GM12878 (cell line): ENCODE measurements at regions of chr11 and their contacts with region 1.

Region 1: DNA sequence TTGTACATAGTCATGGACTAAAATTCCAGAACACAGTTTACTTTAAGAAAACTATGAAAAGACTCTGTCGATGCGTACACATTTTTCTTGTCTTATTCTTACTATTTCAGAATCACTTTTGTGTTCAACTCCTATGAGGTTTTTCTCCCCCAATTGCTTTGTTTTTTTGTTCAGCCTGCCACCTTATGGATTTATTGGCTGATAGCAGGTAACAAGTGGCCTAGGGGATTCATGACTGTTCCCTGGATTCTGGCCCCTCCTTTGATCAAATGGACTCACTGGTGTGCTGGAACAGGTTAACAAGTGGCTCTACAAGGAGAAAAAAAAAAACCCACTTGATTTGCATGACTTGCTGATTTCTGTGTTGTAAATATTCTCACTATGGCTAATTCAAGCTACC is 10.6 kb downstream of the MMP20 start:
- DNase-seq: no peak
- ATAC-seq: 0 out of 3 replicates have a peak, but pooled peaks have one; percentile 3
- H3K4me3 ChIP-seq: no peak overlapping the region
- H3K27ac ChIP-seq: no peak overlapping the region
- H3K4me1 ChIP-seq: peaks cover 18% of the 10 kb centered on the region
- H3K27me3 ChIP-seq: no peaks in the 10 kb centered on the region
- CTCF ChIP-seq: peak; percentile 18 to 55 (median 40); a peak in 5 of 6 replicates
- EP300 ChIP-seq: no peak
- POLR2A ChIP-seq: no peak
- RAD21 ChIP-seq: peak; percentile 80

Region 2: DNA sequence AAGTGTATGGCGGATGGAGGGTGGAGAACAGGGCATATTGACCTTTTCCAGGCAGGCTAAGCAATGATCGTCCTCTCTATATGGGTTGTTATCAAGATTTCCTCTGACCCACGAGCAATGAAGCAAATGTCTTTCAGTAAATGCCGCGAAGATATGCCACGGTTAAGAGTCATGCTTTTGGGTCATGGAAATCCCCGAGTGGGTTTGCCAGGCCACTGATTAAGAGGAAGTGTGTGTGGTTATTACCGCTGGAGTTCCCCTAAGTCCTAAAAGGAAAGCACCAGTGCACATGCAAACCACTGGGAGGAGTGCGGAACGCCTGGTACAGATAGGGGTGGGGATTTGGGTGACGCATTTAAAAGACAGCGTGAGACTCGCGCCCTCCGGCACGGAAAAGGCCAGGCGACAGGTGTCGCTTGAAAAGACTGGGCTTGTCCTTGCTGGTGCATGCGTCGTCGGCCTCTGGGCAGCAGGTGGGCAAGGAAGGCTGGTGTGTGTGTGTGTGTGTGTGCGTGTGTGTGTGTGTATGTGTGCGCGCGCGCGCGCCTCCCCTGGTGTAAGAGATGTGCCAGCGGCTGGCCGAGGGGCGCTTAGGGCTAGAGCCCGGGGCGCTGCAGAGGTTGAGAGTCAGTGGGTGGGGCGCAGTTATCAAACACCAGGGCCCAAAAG is 297.3 kb before region 1 on chr11 and contains the start of gene BIRC3:
- CTCF ChIA-PET with region 1: interaction called, 31 read pairs
- POLR2A ChIA-PET with region 1: interaction called, 4 read pairs
- RAD21 ChIA-PET with region 1: interaction called, 28 read pairs
- SMC1A ChIA-PET with region 1: interaction called, 31 read pairs
- in situ Hi-C with region 1: no loop called
- intact Hi-C with region 1: no loop called
- DNase-seq: peak; percentile 100
- ATAC-seq: peak; percentile 75
- H3K4me3 ChIP-seq: peak within 1 kb of the TSS; percentile 76
- H3K27ac ChIP-seq: peak within 1 kb of the TSS; percentile 97
- H3K4me1 ChIP-seq: peaks cover 24% of the 10 kb centered on the region
- H3K27me3 ChIP-seq: no peaks in the 10 kb centered on the region
- CTCF ChIP-seq: peak in 2 of 3 experiments; percentile 14 to 20; a peak in 2 of 6 replicates
- EP300 ChIP-seq: peak; percentile 99
- POLR2A ChIP-seq: peak; percentile 99
- RAD21 ChIP-seq: no peak
- polyA plus RNA-seq, gene BIRC3: 63.8 to 92.9 TPM

Region 3: DNA sequence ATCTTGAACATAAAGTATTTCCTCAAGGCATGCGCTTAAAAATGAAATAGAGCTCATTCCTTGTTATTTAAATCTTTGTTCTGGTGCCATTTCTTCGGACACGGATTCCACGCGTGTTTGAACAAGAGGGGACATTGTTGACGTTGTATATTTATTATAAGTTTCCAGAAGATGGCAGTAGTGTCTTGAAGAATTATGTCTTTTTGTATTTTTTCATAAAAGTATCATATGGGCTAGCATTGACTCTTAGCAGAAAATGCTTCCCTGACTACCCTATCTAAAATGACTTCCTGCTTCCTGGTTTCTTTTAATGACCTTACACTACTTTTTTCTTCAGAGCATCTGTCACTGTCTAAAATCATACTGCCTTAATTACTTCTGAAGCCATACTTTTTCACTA is 247.1 kb before region 1 on chr11:
- CTCF ChIA-PET with region 1: interaction called, 90 read pairs
- POLR2A ChIA-PET with region 1: interaction called, 3 read pairs
- RAD21 ChIA-PET with region 1: interaction called, 50 read pairs
- SMC1A ChIA-PET with region 1: interaction called, 77 read pairs
- in situ Hi-C with region 1: no loop called
- intact Hi-C with region 1: loop called (anchors 2 kb)
- DNase-seq: no peak
- ATAC-seq: peak; percentile 58
- H3K4me3 ChIP-seq: no peak overlapping the region
- H3K27ac ChIP-seq: no peak overlapping the region
- H3K4me1 ChIP-seq: peaks cover 11% of the 10 kb centered on the region; the same call in 1 of the 2 replicates
- H3K27me3 ChIP-seq: no peaks in the 10 kb centered on the region
- CTCF ChIP-seq: peak; percentile 2 to 25 (median 17); a peak in 2 of 6 replicates
- EP300 ChIP-seq: no peak
- POLR2A ChIP-seq: no peak
- RAD21 ChIP-seq: peak; percentile 40; the same call in 1 of the 2 replicates

Region 4: DNA sequence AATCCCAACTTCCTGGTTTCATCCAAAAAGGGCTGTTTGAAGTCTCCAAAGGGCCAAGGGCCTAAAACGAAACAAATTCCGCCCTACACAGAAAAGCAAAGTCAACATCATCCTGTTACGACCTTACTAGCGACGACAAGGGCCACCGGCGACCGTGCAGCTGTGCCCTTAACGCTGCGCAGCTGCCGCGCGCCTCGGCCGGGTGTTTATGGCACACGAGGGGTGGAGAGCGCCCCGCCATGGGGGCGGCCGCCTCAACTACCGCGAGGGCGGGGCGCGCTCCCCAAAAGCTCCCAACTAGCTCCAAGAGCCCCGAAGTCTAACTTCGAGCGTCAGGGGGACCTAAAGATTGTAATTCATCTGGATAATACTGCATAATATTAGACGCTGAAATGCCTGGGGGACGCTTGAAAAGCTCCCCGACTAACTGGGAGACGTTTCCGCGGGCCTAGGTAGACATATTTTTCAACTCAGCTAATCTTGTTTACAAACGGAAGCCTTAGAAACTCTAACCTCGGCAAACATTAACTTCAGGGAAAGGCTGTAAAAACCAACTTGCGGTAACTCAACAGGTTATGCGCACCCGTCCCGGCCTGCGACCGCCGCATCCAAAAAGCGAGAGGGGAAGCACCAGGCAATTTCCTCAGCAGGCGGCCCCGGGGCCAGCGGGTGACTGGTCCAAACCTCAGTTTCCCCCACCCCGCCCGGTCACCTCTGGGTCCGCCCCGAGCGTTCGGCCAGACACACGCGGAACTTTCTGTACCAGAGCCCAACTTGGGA is 162.6 kb before region 1 on chr11:
- CTCF ChIA-PET with region 1: interaction called, 33 read pairs
- POLR2A ChIA-PET with region 1: no interaction called
- RAD21 ChIA-PET with region 1: interaction called, 9 read pairs
- SMC1A ChIA-PET with region 1: interaction called, 5 read pairs
- in situ Hi-C with region 1: no loop called
- intact Hi-C with region 1: loop called (anchors 5 kb)
- DNase-seq: no peak
- ATAC-seq: peak; percentile 75
- H3K4me3 ChIP-seq: peak overlapping the region; percentile 75
- H3K27ac ChIP-seq: peak overlapping the region; percentile 79
- H3K4me1 ChIP-seq: peaks cover 17% of the 10 kb centered on the region; the same call in 1 of the 2 replicates
- H3K27me3 ChIP-seq: no peaks in the 10 kb centered on the region
- CTCF ChIP-seq: peak; percentile 27 to 44 (median 35); a peak in 3 of 6 replicates
- EP300 ChIP-seq: no peak
- POLR2A ChIP-seq: peak; percentile 84
- RAD21 ChIP-seq: peak; percentile 20; the same call in 1 of the 2 replicates

Region 5: GRCh38 chr11:102530558-102530957 is 83.9 kb before region 1 on chr11 and contains the start of gene MMP7:
- CTCF ChIA-PET with region 1: interaction called, 53 read pairs
- POLR2A ChIA-PET with region 1: interaction called, 9 read pairs
- RAD21 ChIA-PET with region 1: interaction called, 58 read pairs
- SMC1A ChIA-PET with region 1: interaction called, 47 read pairs
- in situ Hi-C with region 1: no loop called
- intact Hi-C with region 1: no loop called
- DNase-seq: no peak
- ATAC-seq: peak; percentile 71
- H3K4me3 ChIP-seq: no peak within 1 kb of the TSS
- H3K27ac ChIP-seq: no peak within 1 kb of the TSS
- H3K4me1 ChIP-seq: no peaks in the 10 kb centered on the region
- H3K27me3 ChIP-seq: no peaks in the 10 kb centered on the region
- CTCF ChIP-seq: no peak
- EP300 ChIP-seq: 0 out of 4 replicates have a peak, but pooled peaks of 1 of the 2 experiments have one; percentile 9
- POLR2A ChIP-seq: no peak
- RAD21 ChIP-seq: no peak
- polyA plus RNA-seq, gene MMP7: 1.6 to 1.7 TPM

Region 6: DNA sequence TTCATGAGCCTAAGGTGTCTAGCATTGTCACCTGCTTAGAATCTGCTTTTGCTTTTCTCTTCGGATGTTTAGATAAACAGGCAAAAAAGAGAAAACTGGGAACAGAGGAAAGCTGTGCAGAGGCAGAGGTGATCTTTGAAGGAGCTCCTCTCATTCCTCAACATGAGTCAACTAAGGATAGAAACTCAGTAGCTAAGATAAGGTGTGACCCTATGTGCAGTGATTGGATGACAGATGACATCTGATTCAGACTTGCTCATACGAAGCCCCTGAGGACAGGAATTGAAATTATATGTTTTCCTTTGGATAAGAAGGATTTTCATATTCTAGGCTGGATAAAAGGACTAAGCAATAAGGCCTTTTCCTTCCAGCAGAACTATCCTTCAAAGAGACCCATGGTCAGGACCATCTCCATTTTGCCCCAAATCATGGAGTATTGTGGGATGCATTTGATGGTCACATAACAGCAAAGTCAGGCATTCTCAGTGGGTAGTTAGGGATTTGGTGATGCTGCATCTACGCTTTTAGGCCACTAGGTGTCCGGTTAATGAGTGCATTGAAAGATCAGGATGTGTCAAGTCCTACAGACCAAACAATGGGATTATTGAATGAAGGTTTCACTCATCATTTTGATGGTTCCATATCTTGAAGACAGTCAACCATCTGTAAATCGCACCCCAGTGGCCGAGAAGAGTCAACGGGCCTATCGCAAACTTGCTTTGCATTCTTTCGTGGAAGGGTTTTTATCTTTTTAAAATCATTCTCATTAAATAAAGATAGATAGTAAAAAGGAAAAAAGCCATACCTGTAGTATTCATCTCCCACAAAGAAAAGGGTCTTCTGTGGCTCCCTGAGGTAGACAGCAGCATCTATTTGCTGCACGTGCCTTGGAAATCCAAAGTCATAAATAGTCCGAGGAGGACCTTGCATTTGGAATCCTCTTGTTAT is 21.6 kb before region 1 on chr11:
- CTCF ChIA-PET with region 1: interaction called, 130 read pairs
- POLR2A ChIA-PET with region 1: interaction called, 14 read pairs
- RAD21 ChIA-PET with region 1: interaction called, 94 read pairs
- SMC1A ChIA-PET with region 1: interaction called, 125 read pairs
- in situ Hi-C with region 1: no loop called
- intact Hi-C with region 1: no loop called
- DNase-seq: no peak
- ATAC-seq: peak; percentile 26; the same call in 2 of the 3 replicates
- H3K4me3 ChIP-seq: no peak overlapping the region
- H3K27ac ChIP-seq: no peak overlapping the region
- H3K4me1 ChIP-seq: peaks cover 32% of the 10 kb centered on the region
- H3K27me3 ChIP-seq: no peaks in the 10 kb centered on the region; a peak in 1 of 4 replicates
- CTCF ChIP-seq: peak; percentile 25 to 70 (median 57)
- EP300 ChIP-seq: no peak
- POLR2A ChIP-seq: no peak
- RAD21 ChIP-seq: peak; percentile 28